Dorsolateral prefrontal cortex (tissue), 120 donors: ENCODE measurements at regions of chr3 and their contacts with region 1.

Region 1: GRCh38 chr3:98732286-98733052 is 30.7 kb upstream of the ST3GAL6 start:
- DNase-seq: peak; percentile 26 to 78 (median 69)
- H3K4me3 ChIP-seq: peak overlapping the region; percentile 64 to 96 (median 87)
- H3K27ac ChIP-seq: peak overlapping the region in 58 of 59 donors; percentile 26 to 96 (median 89)
- H3K27me3 ChIP-seq: no peaks in the 10 kb centered on the region
- CTCF ChIP-seq: peak in 7 of 56 donors; percentile 4 to 25 (median 13)

Region 2: GRCh38 chr3:97981886-97982285 is 750.6 kb before region 1 on chr3:
- intact Hi-C with region 1: loop called in 1 of 2 experiments (anchors 5 kb)
- DNase-seq: no peak
- H3K4me3 ChIP-seq: no peak overlapping the region
- H3K27ac ChIP-seq: no peak overlapping the region
- H3K27me3 ChIP-seq: no peaks in the 10 kb centered on the region
- CTCF ChIP-seq: no peak

Region 3: GRCh38 chr3:98602078-98602678 is 130.3 kb before region 1 on chr3:
- intact Hi-C with region 1: loop called in 1 of 2 experiments (anchors 5 kb)
- DNase-seq: peak in 3 of 10 donors; percentile 15 to 64 (median 41)
- H3K4me3 ChIP-seq: no peak overlapping the region
- H3K27ac ChIP-seq: peak overlapping the region in 11 of 59 donors; percentile 3 to 54 (median 16)
- H3K27me3 ChIP-seq: no peaks in the 10 kb centered on the region
- CTCF ChIP-seq: peak; percentile 67 to 97 (median 84)

Region 4: DNA sequence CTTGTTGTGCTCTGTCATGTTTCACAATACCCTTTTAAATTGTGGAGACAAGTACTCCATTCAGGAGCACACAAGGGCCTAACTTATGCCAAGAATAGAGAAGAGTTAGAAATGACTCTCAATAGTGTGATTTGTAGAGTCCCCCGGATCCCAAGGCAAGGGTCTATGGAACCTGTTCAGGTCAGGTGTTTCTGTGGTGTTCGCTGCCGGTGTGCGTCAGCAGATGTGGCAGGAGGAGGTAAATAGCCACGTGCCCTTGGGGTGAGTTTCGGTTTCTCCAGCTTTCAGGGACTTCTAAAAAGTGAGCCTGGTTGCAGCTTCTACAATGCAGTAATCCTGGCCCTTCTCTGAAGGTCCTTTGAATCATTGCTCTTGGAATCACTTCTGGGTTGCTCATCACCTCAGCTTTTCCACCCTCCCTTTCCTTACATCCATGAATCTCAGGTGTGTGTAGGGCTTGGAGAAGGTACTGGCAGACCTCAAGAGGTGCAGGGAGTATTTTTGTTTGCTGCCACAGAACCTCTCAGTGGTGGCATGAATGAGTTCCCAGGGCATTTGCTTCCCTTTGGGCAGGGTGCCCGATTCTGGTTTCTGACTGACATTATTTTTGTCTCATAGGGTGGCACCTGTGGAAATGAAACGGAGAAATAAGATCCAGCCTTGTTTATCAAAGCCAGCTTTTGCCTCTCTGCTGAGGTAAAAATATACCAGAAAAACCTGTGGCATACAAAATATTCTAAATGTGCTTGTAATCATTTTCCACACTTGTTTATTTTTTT is 38.0 kb after region 1 on chr3:
- intact Hi-C with region 1: loop called (anchors 5 kb)
- DNase-seq: peak in 1 of 10 donors; percentile 22
- H3K4me3 ChIP-seq: peak overlapping the region in 47 of 59 donors; percentile 2 to 62 (median 37)
- H3K27ac ChIP-seq: peak overlapping the region in 57 of 59 donors; percentile 17 to 91 (median 78)
- H3K27me3 ChIP-seq: no peaks in the 10 kb centered on the region
- CTCF ChIP-seq: no peak

Region 5: DNA sequence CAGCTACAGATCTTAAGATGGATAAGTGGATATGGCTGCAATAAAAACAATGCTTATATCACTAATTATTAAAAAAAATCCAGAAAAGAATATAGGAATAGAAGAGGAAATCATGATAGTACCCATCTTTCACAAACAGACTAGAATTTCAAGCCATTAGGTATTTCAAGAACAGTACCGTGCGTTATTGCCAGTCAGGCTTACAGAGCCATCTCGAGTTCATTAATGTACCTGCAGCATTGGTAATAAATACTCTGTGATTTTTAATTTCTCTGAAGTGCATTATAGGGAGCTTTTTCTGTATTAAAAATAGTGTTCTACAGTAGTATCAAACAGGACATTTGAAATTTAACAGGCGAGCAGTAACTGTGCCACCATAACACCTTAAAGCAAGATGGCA is 66.4 kb after region 1 on chr3:
- intact Hi-C with region 1: loop called in 1 of 2 experiments (anchors 10 kb)
- DNase-seq: no peak
- H3K4me3 ChIP-seq: no peak overlapping the region
- H3K27ac ChIP-seq: peak overlapping the region in 15 of 59 donors; percentile 3 to 71 (median 33)
- H3K27me3 ChIP-seq: no peaks in the 10 kb centered on the region
- CTCF ChIP-seq: peak in 2 of 56 donors; percentile 14 to 15

Region 6: GRCh38 chr3:98809557-98809956 is 77.1 kb after region 1 on chr3:
- intact Hi-C with region 1: loop called in 1 of 2 experiments (anchors 5 kb)
- DNase-seq: no peak
- H3K4me3 ChIP-seq: no peak overlapping the region
- H3K27ac ChIP-seq: peak overlapping the region in 1 of 59 donors; percentile 17
- H3K27me3 ChIP-seq: no peaks in the 10 kb centered on the region
- CTCF ChIP-seq: no peak

Region 7: DNA sequence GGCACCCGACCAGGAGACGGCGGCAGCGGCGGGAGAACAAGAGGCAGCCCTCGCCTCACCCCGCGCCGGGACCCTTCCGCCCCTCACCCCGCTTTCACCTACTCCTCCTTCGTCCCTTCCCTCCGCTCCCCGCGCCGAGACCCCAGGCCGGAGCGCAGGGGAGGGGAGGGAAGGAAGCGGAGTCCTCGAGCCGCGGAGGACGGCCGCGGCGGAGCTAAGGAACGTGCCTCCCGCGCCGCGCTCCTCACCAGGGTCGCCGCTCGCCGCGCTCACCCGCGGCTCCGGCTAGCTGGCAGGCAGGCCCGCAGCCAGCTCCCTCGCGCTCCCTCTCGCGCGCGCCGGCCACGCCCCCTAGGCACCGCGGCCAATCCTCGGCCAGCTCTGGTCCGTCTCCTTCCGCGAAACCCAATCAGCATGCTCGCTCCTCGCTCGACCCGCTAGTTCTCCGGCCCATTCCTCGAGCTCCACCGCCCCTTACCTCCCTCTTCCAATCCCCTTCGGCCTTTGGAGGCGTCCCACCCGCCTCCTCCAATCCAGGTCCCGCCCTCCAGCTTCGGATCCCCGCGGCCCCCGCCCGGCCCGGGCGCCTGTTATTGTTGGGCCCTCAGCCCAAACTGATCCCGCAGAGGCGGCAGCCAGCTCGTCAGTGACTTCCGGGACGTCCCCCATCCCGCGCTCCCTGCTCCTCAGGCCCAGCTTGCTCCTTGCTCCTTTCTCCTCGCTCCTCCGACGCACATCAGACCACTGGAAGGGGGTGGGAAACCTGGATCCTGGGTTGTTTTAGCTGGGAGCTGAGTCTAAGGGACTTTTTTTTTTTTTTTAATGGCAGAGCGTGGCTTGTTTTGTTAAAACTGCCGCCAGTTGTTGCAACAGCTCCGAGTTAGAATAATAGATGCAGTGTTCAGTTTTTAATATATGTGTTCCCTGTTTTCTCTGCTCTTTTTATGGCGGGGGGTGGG is 169.2 kb after region 1 on chr3 and contains the start of gene DCBLD2:
- intact Hi-C with region 1: loop called (anchors 2 to 5 kb)
- DNase-seq: peak; percentile 95 to 99 (median 98)
- H3K4me3 ChIP-seq: peak within 1 kb of the TSS; percentile 66 to 98 (median 89)
- H3K27ac ChIP-seq: peak within 1 kb of the TSS; percentile 59 to 97 (median 92)
- H3K27me3 ChIP-seq: no peaks in the 10 kb centered on the region
- CTCF ChIP-seq: peak in 15 of 56 donors; percentile 7 to 48 (median 18)
- total RNA-seq, gene DCBLD2: 13.2 to 33.0 (median 22.0) TPM

Region 8: GRCh38 chr3:99012051-99012450 is 279.6 kb after region 1 on chr3:
- intact Hi-C with region 1: no loop called
- DNase-seq: no peak
- H3K4me3 ChIP-seq: no peak overlapping the region
- H3K27ac ChIP-seq: no peak overlapping the region
- H3K27me3 ChIP-seq: peaks cover 0 to 3% (median 0%) of the 10 kb centered on the region in 45 donors
- CTCF ChIP-seq: no peak